Caco-2 (cell line): ENCODE measurements at regions of chr1 and their contacts with region 1.

Region 1: GRCh38 chr1:88877382-88877825 is 14.0 kb downstream of the GTF2B start:
- DNase-seq: no peak
- H3K4me3 ChIP-seq: no peak overlapping the region
- H3K4me3 Mint-ChIP-seq: no peak overlapping the region
- H3K27ac Mint-ChIP-seq: no peak overlapping the region
- H3K4me1 ChIP-seq: no peaks in the 10 kb centered on the region
- H3K4me1 Mint-ChIP-seq: no peaks in the 10 kb centered on the region
- H3K27me3 ChIP-seq: no peaks in the 10 kb centered on the region
- H3K27me3 Mint-ChIP-seq: no peaks in the 10 kb centered on the region
- CTCF ChIP-seq: peak; percentile 5 to 42

Region 2: DNA sequence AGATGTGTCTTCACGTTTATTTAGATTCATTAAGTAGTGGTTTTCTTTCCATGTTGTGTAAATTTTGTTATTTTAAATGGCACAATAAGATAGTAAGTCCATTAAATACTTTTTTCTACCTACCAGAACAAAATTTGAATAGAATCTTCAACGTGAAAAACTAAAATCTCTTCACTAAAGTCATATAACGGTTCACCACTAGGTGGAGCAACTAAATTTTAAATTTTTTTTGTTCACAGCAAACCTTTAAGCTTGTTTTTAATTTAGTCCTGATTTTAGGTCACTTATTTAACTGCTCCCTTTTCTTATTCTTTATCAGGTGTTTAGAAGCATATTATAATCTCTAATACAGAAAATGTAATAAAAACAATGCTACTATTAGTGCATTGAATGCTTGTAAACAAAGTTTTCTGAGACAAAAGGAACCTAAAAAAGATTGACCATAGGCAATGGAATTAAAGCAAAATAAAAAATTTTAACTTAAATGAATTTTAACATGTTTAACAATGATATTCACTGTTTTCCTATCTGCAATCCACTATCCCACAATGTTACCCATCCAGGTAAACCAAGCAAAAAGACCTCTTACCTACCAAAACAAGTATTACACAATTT is 221.6 kb before region 1 on chr1:
- CTCF ChIA-PET with region 1: interaction called, 3 read pairs
- POLR2A ChIA-PET with region 1: no interaction called
- intact Hi-C with region 1: loop called (anchors 2 kb)
- DNase-seq: peak in 1 of 2 experiments; percentile 4
- H3K4me3 ChIP-seq: no peak overlapping the region
- H3K4me3 Mint-ChIP-seq: no peak overlapping the region
- H3K27ac Mint-ChIP-seq: no peak overlapping the region
- H3K4me1 ChIP-seq: no peaks in the 10 kb centered on the region
- H3K4me1 Mint-ChIP-seq: no peaks in the 10 kb centered on the region
- H3K27me3 ChIP-seq: no peaks in the 10 kb centered on the region
- H3K27me3 Mint-ChIP-seq: no peaks in the 10 kb centered on the region
- CTCF ChIP-seq: peak; percentile 26 to 28

Region 3: GRCh38 chr1:88736639-88737248 is 140.7 kb before region 1 on chr1:
- CTCF ChIA-PET with region 1: no interaction called
- POLR2A ChIA-PET with region 1: no interaction called
- intact Hi-C with region 1: loop called (anchors 1 kb)
- DNase-seq: peak; percentile 40 to 51
- H3K4me3 ChIP-seq: no peak overlapping the region
- H3K4me3 Mint-ChIP-seq: no peak overlapping the region
- H3K27ac Mint-ChIP-seq: no peak overlapping the region
- H3K4me1 ChIP-seq: no peaks in the 10 kb centered on the region
- H3K4me1 Mint-ChIP-seq: peaks cover 17% of the 10 kb centered on the region
- H3K27me3 ChIP-seq: no peaks in the 10 kb centered on the region
- H3K27me3 Mint-ChIP-seq: no peaks in the 10 kb centered on the region
- CTCF ChIP-seq: peak; percentile 42 to 43

Region 4: GRCh38 chr1:88799491-88799890 is 77.9 kb before region 1 on chr1:
- CTCF ChIA-PET with region 1: no interaction called
- POLR2A ChIA-PET with region 1: no interaction called
- intact Hi-C with region 1: loop called (anchors 10 kb)
- DNase-seq: no peak
- H3K4me3 ChIP-seq: no peak overlapping the region
- H3K4me3 Mint-ChIP-seq: no peak overlapping the region
- H3K27ac Mint-ChIP-seq: no peak overlapping the region
- H3K4me1 ChIP-seq: no peaks in the 10 kb centered on the region
- H3K4me1 Mint-ChIP-seq: no peaks in the 10 kb centered on the region
- H3K27me3 ChIP-seq: no peaks in the 10 kb centered on the region
- H3K27me3 Mint-ChIP-seq: no peaks in the 10 kb centered on the region
- CTCF ChIP-seq: no peak

Region 5: DNA sequence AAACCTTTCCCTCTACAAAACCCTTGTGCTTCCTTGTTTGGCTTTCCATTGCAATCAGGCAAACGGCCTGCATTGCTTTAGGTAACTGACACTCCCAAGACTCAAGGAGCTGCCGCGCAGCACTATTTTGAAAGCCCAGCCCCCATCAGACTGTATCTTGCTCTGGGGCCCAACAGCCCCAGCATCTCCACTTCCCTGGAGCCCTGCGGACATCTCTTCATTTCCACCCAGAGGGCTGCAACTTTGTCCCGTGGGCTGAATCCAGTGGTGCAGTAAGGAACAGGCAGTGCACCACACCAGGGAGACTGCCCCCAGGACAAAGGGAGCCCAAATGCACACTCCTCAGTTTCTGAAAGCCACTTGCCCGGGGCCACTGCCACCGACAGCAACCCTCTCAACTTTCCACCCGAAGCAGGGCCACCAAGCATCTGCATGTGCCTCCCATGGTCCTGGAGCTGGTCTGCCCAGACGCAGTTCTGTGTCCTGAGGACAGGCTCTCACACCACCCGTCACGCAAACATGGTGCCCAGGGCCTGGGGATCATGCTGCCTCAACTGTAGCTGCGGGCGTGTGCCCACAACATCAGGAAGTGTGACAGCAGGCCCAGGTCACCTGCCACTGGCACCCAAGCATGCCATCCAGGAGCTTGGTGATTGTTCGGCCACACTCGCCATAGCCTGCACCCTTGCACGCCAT is 173.1 kb after region 1 on chr1:
- CTCF ChIA-PET with region 1: no interaction called
- POLR2A ChIA-PET with region 1: no interaction called
- intact Hi-C with region 1: no loop called
- DNase-seq: no peak
- H3K4me3 ChIP-seq: no peak overlapping the region
- H3K4me3 Mint-ChIP-seq: no peak overlapping the region
- H3K27ac Mint-ChIP-seq: no peak overlapping the region
- H3K4me1 ChIP-seq: peaks cover 8% of the 10 kb centered on the region; the same call in 1 of the 2 replicates
- H3K4me1 Mint-ChIP-seq: no peaks in the 10 kb centered on the region
- H3K27me3 ChIP-seq: no peaks in the 10 kb centered on the region
- H3K27me3 Mint-ChIP-seq: no peaks in the 10 kb centered on the region
- CTCF ChIP-seq: no peak